Sigmoid colon (tissue), 7 donors: ENCODE measurements at regions of chr14 and their contacts with region 1.

Region 1: DNA sequence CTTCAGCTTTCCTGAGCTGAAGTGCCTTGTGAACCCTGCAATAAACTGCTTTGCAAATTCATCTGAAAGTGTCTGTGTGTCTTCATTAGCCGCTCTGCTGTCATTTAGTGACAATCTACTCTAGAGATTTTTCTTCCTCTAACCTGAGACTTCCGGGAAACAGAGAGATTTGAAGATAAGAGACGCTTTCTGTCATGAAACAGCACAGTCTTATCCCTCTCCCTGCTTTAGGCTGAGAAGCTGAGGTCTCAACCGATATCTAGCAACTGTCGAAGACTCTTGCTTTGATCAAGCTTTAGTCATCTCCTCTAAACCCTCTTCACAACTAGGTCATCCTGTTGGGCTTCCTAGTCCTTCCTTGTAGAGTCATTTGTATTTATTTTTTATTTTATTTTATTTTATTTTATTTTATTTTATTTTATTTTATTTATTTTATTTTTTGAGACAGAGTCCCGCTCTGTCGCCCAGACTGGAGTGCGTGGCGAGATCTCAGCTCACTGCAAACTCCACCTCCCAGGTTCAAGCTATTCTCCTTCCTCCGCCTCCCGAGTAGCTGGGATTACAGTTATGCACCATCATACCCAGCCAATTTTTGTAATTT is 1.2 kb downstream of the RNASE2 start:
- DNase-seq: no peak
- H3K4me3 ChIP-seq: no peak overlapping the region
- H3K27ac ChIP-seq: no peak overlapping the region
- H3K4me1 ChIP-seq: no peaks in the 10 kb centered on the region
- H3K27me3 ChIP-seq: no peaks in the 10 kb centered on the region
- CTCF ChIP-seq: no peak
- EP300 ChIP-seq: no peak
- POLR2A ChIP-seq: no peak

Region 2: DNA sequence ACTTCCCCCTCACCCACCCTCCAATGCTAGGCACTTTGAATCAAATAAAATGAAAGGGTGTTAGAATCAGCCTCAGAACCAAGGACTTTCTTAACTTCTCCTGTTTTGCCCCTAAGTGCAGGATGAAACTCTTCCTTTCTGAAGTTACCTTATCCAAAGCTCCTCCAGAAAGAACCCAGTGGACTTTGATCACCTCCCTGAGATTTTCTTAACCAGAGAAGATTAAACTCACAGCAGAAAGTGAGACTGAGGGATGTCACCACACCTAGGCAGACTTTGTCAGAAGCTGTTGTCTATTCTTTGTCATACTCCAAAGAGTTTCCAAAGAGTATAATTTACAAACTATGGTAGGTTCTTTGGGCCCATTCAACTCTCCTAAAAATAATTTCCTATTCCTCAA is 79.5 kb before region 1 on chr14:
- intact Hi-C with region 1: loop called (anchors 5 kb)
- DNase-seq: no peak
- H3K4me3 ChIP-seq: no peak overlapping the region
- H3K27ac ChIP-seq: no peak overlapping the region
- H3K4me1 ChIP-seq: no peaks in the 10 kb centered on the region
- H3K27me3 ChIP-seq: no peaks in the 10 kb centered on the region
- CTCF ChIP-seq: no peak
- EP300 ChIP-seq: no peak
- POLR2A ChIP-seq: no peak

Region 3: GRCh38 chr14:20976291-20976690 is 19.8 kb after region 1 on chr14:
- intact Hi-C with region 1: no loop called
- DNase-seq: no peak
- H3K4me3 ChIP-seq: no peak overlapping the region
- H3K27ac ChIP-seq: no peak overlapping the region
- H3K4me1 ChIP-seq: peaks cover 0 to 6% (median 5%) of the 10 kb centered on the region in 4 donors
- H3K27me3 ChIP-seq: no peaks in the 10 kb centered on the region
- CTCF ChIP-seq: no peak
- EP300 ChIP-seq: no peak
- POLR2A ChIP-seq: no peak